ENCODE measurements at regions of chr4 and their contacts with region 1.

Region 1: GRCh38 chr4:2186133-2186864 is 55.6 kb downstream of the HAUS3 start:
- DNase-seq: peak; percentile 72
- H3K4me3 Mint-ChIP-seq: no peak overlapping the region
- H3K27ac Mint-ChIP-seq: no peak overlapping the region
- H3K4me1 Mint-ChIP-seq: peaks cover 4% of the 10 kb centered on the region
- H3K27me3 Mint-ChIP-seq: no peaks in the 10 kb centered on the region

Region 2: GRCh38 chr4:1910643-1911042 is 275.7 kb before region 1 on chr4:
- intact Hi-C with region 1: loop called (anchors 10 kb)
- DNase-seq: peak; percentile 82
- H3K4me3 Mint-ChIP-seq: no peak overlapping the region
- H3K27ac Mint-ChIP-seq: no peak overlapping the region
- H3K4me1 Mint-ChIP-seq: peaks cover 45% of the 10 kb centered on the region
- H3K27me3 Mint-ChIP-seq: no peaks in the 10 kb centered on the region

Region 3: DNA sequence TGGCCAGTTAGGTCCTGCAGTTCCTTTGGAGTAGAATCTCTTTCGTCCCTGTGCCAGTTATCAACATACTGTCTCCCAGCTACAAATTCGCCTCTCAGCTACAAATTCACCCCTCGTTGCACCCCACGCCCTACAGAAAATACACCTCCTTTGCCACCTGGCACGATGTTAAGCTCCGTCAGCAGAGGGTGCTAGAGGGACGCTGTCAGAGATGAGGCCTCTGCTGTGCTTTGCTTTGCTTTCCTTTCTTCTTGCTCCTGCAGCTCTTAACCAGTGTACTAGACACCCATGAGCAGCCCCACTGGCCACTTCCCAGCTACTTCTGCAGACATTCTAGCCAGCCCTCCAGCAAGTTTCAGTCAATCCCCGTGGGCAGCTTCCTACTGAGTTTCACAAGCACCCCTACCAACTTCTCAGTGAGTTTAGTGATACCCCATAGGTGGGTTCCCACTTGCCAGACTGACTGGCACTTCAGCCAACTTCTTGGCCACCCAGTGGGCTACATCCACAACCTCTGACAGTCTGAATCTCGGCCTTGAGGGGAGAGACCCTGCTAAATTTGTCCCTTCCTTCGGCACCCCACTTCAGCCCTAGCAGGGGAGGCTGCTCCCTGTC is 33.8 kb after region 1 on chr4:
- intact Hi-C with region 1: no loop called
- DNase-seq: peak; percentile 94
- H3K4me3 Mint-ChIP-seq: no peak overlapping the region
- H3K27ac Mint-ChIP-seq: no peak overlapping the region
- H3K4me1 Mint-ChIP-seq: peaks cover 8% of the 10 kb centered on the region
- H3K27me3 Mint-ChIP-seq: no peaks in the 10 kb centered on the region

Region 4: DNA sequence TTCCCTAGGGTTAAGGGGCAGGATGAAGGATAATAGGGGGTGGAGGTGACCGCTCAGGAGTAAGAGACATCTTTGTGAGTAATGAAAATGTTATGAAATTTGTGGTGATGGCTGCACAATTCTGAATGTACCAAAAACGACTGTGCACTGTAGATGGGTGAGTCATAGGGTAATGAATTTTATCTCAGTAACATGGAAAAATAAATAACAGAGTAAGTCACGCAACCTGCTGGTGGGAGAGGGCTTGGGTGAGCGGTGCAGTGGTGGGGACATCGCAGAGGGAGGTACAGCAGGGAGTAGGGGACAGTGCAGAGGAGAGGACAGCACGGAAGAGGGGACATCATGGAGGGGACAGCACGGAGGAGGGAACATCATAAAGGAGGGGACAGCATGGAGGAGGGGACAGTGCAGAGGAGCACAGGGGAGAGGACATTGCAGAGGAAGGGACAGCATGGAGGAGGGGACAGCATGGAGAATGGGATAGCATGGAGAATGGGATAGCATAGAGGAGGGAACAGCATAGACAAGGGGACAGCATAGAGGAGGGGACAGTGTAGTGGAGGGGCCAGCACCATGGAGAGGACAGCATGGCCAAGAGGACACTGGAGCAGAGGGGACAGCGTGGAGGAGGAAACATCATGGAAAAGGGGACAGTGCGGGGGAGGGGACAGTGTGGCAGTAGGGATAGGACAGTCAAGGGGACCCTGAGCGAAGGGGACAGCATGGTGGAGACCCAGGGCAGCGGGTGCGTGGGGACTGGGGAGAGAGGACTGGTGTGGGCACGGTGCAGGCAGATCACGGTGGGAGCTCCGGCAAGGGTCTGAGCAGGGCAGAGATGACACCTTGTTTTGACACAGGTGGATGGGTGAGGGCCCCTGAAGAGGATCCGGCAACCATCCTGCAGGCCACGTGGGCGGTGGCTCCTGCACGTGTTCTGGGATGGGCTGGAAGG is 144.1 kb after region 1 on chr4:
- intact Hi-C with region 1: no loop called
- DNase-seq: no peak
- H3K4me3 Mint-ChIP-seq: no peak overlapping the region
- H3K27ac Mint-ChIP-seq: no peak overlapping the region
- H3K4me1 Mint-ChIP-seq: no peaks in the 10 kb centered on the region
- H3K27me3 Mint-ChIP-seq: peaks cover 5% of the 10 kb centered on the region